ENCODE measurements at regions of chr5 and their contacts with region 1.

Region 1: DNA sequence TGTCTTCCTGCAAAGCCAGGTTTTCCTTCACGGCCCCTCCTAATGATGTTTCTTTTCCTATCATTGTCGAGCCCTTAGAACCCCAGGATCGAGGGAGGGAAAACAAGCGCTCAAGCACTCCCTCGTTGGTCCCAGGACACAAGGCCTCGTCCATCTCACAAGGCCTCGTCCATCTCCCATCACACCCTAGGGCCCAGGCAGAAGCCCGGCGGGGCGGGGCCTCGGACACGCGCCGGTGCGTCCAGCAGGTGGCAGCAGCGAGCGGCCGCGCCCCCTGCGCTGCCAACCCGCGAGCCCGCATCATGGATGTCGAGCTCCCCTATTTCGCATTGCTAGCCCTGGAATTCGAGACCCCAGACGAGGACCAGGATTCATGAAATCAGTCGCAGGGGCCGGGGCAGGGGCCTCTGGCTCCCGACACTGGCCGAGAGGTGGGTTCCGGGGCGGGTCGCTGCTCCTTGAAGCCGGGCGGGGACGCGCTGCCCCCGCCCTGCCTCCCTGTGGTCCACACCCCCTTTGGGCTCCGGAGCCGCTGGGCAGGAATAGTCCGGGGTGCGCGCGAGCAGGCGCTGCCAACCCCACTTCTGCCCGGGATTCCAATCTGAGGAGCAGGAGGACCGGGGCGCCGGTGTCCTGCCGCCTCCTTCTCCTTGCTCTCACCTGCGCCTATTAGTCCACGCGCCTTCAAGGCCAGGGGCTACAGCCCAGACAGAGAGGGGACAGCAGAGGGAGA is at the start of gene ABLIM3:
- DNase-seq: peak; percentile 72 to 93 (median 90)
- ATAC-seq: peak; percentile 99
- H3K4me3 ChIP-seq: peak within 1 kb of the TSS; percentile 45
- H3K27ac ChIP-seq: no peak within 1 kb of the TSS
- H3K4me1 ChIP-seq: peaks cover 0 to 11% of the 10 kb centered on the region in 2 experiments; a peak in 2 of 5 replicates
- H3K27me3 ChIP-seq: peaks cover 2 to 16% of the 10 kb centered on the region in 2 experiments; a peak in 2 of 5 replicates
- CTCF ChIP-seq: peak; percentile 86 to 94 (median 92)
- EP300 ChIP-seq: no peak
- POLR2A ChIP-seq: no peak
- RAD21 ChIP-seq: peak; percentile 83 to 85
- polyA plus RNA-seq, gene ABLIM3: 0.08 to 0.10 TPM

Region 2: GRCh38 chr5:149079883-149080282 is 61.5 kb before region 1 on chr5:
- CTCF ChIA-PET with region 1: no interaction called
- POLR2A ChIA-PET with region 1: no interaction called
- in situ Hi-C with region 1: no loop called
- intact Hi-C with region 1: no loop called
- DNase-seq: peak in 2 of 4 experiments; percentile 11 to 42
- ATAC-seq: no peak
- H3K4me3 ChIP-seq: no peak overlapping the region
- H3K27ac ChIP-seq: no peak overlapping the region
- H3K4me1 ChIP-seq: no peaks in the 10 kb centered on the region
- H3K27me3 ChIP-seq: no peaks in the 10 kb centered on the region; a peak in 1 of 5 replicates
- CTCF ChIP-seq: no peak
- EP300 ChIP-seq: peak; percentile 84
- POLR2A ChIP-seq: no peak
- RAD21 ChIP-seq: no peak

Region 3: DNA sequence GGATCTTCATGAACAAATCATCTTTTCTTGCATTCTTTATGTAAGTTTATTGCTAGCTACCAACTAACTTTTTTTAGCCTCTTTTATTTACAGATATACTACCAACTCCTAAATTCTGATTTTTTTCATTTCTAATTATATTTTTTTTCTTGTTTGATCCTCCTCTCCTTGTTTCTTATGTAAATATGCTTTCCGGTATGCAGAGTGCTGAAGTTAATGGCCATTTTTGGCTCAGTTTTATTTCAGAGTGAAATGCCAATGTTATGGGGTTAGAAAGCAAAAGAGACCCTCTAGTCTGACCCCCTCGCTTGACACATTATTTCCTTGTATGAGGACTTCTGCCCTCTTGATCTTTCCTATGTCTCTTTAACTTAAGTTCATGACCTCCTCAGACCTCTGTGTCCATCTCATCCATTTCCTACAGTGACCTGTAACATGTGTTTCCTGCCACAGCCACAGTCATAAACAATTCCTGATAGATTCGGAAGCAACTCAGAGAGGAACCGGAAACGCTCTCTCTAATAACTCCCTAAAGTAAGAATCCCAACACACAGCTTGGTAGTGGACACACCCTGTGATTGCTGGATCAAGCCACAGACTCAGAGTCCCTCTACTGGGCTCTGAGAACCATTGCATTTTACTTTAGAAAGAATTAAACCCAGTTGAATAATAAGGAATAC is 87.4 kb after region 1 on chr5:
- CTCF ChIA-PET with region 1: interaction called, 3 read pairs
- POLR2A ChIA-PET with region 1: no interaction called
- in situ Hi-C with region 1: no loop called
- intact Hi-C with region 1: loop called (anchors 1 kb)
- DNase-seq: peak; percentile 31 to 56 (median 40)
- ATAC-seq: peak; percentile 96
- H3K4me3 ChIP-seq: no peak overlapping the region
- H3K27ac ChIP-seq: no peak overlapping the region
- H3K4me1 ChIP-seq: no peaks in the 10 kb centered on the region; a peak in 1 of 5 replicates
- H3K27me3 ChIP-seq: peaks cover 7 to 13% of the 10 kb centered on the region in 2 experiments; a peak in 4 of 5 replicates
- CTCF ChIP-seq: peak; percentile 58 to 87 (median 59)
- EP300 ChIP-seq: no peak
- POLR2A ChIP-seq: no peak
- RAD21 ChIP-seq: peak; percentile 93 to 94